ENCODE measurements at regions of chr16 and their contacts with region 1.

Region 1: GRCh38 chr16:1863681-1864460 is 8.1 kb downstream of the MEIOB start:
- DNase-seq: no peak
- H3K4me3 ChIP-seq: no peak overlapping the region
- H3K27ac ChIP-seq: no peak overlapping the region
- H3K4me1 ChIP-seq: no peaks in the 10 kb centered on the region
- H3K27me3 ChIP-seq: no peaks in the 10 kb centered on the region
- CTCF ChIP-seq: peak in 2 of 3 donors; percentile 20 to 41
- EP300 ChIP-seq: no peak
- POLR2A ChIP-seq: no peak

Region 2: DNA sequence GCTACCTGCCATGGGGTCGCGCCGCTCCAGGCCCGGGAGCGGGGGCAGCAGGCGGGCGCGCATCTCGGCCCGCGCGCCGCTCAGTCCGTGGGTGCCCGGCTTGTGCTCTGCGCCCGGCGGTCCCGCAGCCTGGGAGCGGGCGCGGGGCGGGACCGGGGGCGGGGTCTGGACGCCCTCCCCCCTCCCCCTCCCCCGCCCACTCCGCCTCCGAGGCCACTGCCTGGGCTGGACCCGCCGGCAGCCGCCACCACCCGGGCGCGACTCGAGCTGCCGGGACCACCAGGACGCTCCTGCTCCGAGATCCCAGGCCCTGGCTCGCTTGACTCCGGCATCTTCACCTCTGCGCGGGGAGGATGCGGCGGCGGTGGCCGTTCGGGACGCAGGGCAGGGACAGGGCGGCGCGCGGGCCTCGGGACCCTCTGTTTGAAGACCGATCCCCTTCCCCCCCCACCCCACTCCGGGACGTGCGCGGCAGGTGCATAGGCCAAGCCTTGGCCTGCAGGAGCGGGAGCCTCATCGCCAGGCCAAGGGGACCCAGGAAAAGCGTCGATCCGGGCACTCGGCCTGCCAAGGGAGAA is 54.5 kb after region 1 on chr16 and contains the start of gene HS3ST6:
- intact Hi-C with region 1: loop called in 1 of 4 experiments (anchors 5 kb)
- DNase-seq: no peak
- H3K4me3 ChIP-seq: no peak within 1 kb of the TSS
- H3K27ac ChIP-seq: no peak within 1 kb of the TSS
- H3K4me1 ChIP-seq: no peaks in the 10 kb centered on the region
- H3K27me3 ChIP-seq: no peaks in the 10 kb centered on the region
- CTCF ChIP-seq: no peak
- EP300 ChIP-seq: no peak
- POLR2A ChIP-seq: no peak
- total RNA-seq, gene HS3ST6: 0.69 to 1.8 TPM in 2 of 7 donors, not detected in the others

Region 3: GRCh38 chr16:1929578-1930337 is 65.9 kb after region 1 on chr16:
- intact Hi-C with region 1: loop called in 3 of 4 experiments (anchors 2 to 5 kb)
- DNase-seq: peak; percentile 83 to 95 (median 92)
- H3K4me3 ChIP-seq: peak overlapping the region; percentile 59
- H3K27ac ChIP-seq: no peak overlapping the region
- H3K4me1 ChIP-seq: no peaks in the 10 kb centered on the region
- H3K27me3 ChIP-seq: no peaks in the 10 kb centered on the region
- CTCF ChIP-seq: peak; percentile 98 to 100 (median 100)
- EP300 ChIP-seq: no peak
- POLR2A ChIP-seq: no peak

Region 4: GRCh38 chr16:2033057-2033908 is 169.4 kb after region 1 on chr16:
- intact Hi-C with region 1: no loop called
- DNase-seq: peak in 4 of 5 donors; percentile 72 to 82 (median 78)
- H3K4me3 ChIP-seq: peak overlapping the region; percentile 17
- H3K27ac ChIP-seq: peak overlapping the region; percentile 74 to 82
- H3K4me1 ChIP-seq: peaks cover 50% of the 10 kb centered on the region
- H3K27me3 ChIP-seq: no peaks in the 10 kb centered on the region
- CTCF ChIP-seq: no peak
- EP300 ChIP-seq: no peak
- POLR2A ChIP-seq: no peak

Measured in ovary (tissue), 10 donors.